ENCODE measurements at regions of chr1 and their contacts with region 1.

Region 1: GRCh38 chr1:43934101-43934985 is 742 bp downstream of the ARTN start:
- DNase-seq: peak; percentile 85
- H3K4me3 ChIP-seq: peak overlapping the region; percentile 34
- H3K27ac ChIP-seq: peak overlapping the region; percentile 60
- H3K4me1 ChIP-seq: peaks cover 18% of the 10 kb centered on the region
- H3K27me3 ChIP-seq: peaks cover 5% of the 10 kb centered on the region
- CTCF ChIP-seq: peak; percentile 79

Region 2: GRCh38 chr1:43529206-43529731 is 405.1 kb before region 1 on chr1:
- intact Hi-C with region 1: loop called (anchors 10 kb)
- DNase-seq: peak; percentile 93
- H3K4me3 ChIP-seq: no peak overlapping the region
- H3K27ac ChIP-seq: no peak overlapping the region
- H3K4me1 ChIP-seq: peaks cover 3% of the 10 kb centered on the region
- H3K27me3 ChIP-seq: no peaks in the 10 kb centered on the region
- CTCF ChIP-seq: peak; percentile 98

Region 3: DNA sequence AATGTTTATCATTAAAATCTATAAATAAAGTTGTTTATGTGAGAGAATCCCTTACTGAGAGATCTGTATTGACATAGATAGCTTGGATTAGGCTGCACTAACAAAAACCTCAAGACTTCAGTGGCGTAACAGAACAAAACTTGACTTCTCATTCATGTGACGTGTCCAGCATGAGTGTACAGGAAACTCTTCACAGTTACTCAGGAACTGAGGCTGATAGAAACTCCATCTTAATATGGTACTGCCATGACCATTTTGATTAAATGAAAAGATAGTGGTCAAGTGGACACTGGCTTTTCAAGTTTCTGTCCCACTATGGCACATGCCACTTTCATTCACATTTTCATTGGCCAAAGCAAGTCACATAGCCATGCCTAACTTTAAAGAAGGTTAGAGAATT is 223.3 kb before region 1 on chr1:
- intact Hi-C with region 1: loop called (anchors 5 kb)
- DNase-seq: no peak
- H3K4me3 ChIP-seq: no peak overlapping the region
- H3K27ac ChIP-seq: no peak overlapping the region
- H3K4me1 ChIP-seq: no peaks in the 10 kb centered on the region
- H3K27me3 ChIP-seq: no peaks in the 10 kb centered on the region
- CTCF ChIP-seq: no peak

Region 4: GRCh38 chr1:43763497-43763973 is 170.8 kb before region 1 on chr1:
- intact Hi-C with region 1: loop called (anchors 1 kb)
- DNase-seq: peak; percentile 80
- H3K4me3 ChIP-seq: no peak overlapping the region
- H3K27ac ChIP-seq: no peak overlapping the region
- H3K4me1 ChIP-seq: no peaks in the 10 kb centered on the region
- H3K27me3 ChIP-seq: no peaks in the 10 kb centered on the region
- CTCF ChIP-seq: peak; percentile 67

Region 5: DNA sequence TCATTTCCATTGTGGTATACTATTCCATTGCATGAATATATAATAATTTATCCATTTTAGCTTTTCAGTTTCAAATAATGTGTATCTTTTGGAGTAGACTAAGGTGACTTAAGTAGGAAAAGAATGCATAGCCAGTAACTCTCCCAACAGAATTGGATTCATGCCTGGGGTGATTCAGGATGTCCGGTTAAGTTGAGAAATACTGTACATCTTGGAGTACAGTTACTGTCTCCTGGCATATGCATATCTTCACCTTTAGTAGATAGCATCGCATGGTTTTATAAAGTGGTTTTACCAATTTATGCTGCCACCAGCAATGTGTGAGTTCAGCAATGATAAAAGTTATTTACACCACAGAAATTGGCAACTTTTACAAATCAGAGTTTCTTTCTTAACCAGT is 115.5 kb after region 1 on chr1:
- intact Hi-C with region 1: loop called (anchors 10 kb)
- DNase-seq: no peak
- H3K4me3 ChIP-seq: no peak overlapping the region
- H3K27ac ChIP-seq: no peak overlapping the region
- H3K4me1 ChIP-seq: no peaks in the 10 kb centered on the region
- H3K27me3 ChIP-seq: no peaks in the 10 kb centered on the region
- CTCF ChIP-seq: no peak